Activated naive CD4-positive, alpha-beta T cell treated with anti-CD3 and anti-CD28 coated beads for 36 hours (primary cell): ENCODE measurements at regions of chrX and their contacts with region 1.

Region 1: DNA sequence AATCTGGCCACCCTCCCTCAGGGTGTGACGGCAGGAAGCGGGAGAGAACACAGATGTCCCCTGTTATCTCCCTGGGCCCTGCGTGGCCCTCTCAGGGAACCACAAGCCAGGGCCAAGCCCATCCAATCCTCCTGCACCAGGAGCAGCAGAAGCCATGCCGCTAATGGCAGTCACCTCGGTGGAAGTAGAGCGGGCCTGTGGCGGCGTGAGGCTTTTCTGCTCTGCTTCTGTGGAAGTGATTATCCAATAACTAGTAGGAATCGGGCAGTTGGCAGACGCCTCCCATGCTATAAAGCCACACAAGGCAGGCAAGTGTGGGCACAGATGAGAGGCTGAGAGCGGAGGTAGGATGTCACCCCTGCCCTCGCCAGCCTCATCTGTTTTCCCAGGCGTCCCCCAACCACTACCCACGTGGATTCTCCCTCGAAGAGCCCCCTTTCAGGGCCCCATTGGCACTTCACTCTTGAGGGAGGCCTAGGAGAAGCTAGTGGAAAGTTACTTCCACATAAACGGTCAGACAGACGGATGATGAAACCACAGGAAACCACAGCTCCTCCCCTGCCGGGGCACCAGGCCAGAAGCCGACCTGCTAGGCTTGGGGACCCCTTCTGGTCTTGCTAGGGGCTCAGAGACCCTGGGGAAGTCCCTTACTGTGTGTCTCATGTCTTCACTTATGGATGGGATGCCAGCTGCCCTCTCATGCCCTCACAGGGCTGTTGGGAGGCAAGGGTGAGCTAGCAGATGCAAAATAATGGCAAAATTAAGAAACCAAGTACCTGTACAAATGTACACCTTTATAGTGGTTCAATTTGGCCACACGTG is 18.8 kb upstream of the TMSB4X start:
- DNase-seq: peak; percentile 81
- H3K4me3 Mint-ChIP-seq: peak overlapping the region; percentile 83
- H3K27ac Mint-ChIP-seq: peak overlapping the region; percentile 98
- H3K4me1 Mint-ChIP-seq: peaks cover 68% of the 10 kb centered on the region
- H3K27me3 Mint-ChIP-seq: no peaks in the 10 kb centered on the region

Region 2: GRCh38 chrX:12966151-12966550 is 10.1 kb after region 1 on chrX:
- CTCF ChIA-PET with region 1: interaction called, 125 read pairs
- intact Hi-C with region 1: loop called (anchors 1 kb)
- DNase-seq: no peak
- H3K4me3 Mint-ChIP-seq: peak overlapping the region; percentile 38
- H3K27ac Mint-ChIP-seq: peak overlapping the region; percentile 96
- H3K4me1 Mint-ChIP-seq: peaks cover 56% of the 10 kb centered on the region
- H3K27me3 Mint-ChIP-seq: no peaks in the 10 kb centered on the region

Region 3: GRCh38 chrX:13077168-13077567 is 121.1 kb after region 1 on chrX:
- CTCF ChIA-PET with region 1: no interaction called
- intact Hi-C with region 1: loop called (anchors 1 kb)
- DNase-seq: peak; percentile 69
- H3K4me3 Mint-ChIP-seq: no peak overlapping the region
- H3K27ac Mint-ChIP-seq: peak overlapping the region; percentile 80
- H3K4me1 Mint-ChIP-seq: peaks cover 72% of the 10 kb centered on the region
- H3K27me3 Mint-ChIP-seq: no peaks in the 10 kb centered on the region